Activated CD4-positive, alpha-beta memory T cell treated with anti-CD3 and anti-CD28 coated beads for 36 hours (primary cell): ENCODE measurements at regions of chrX and their contacts with region 1.

Region 1: GRCh38 chrX:136880452-136881013 is at the start of gene RBMX:
- DNase-seq: peak; percentile 93
- H3K4me3 Mint-ChIP-seq: peak within 1 kb of the TSS; percentile 98
- H3K27ac Mint-ChIP-seq: peak within 1 kb of the TSS; percentile 99
- H3K4me1 Mint-ChIP-seq: peaks cover 13% of the 10 kb centered on the region
- H3K27me3 Mint-ChIP-seq: no peaks in the 10 kb centered on the region
- total RNA-seq, gene RBMX: 269 to 271 TPM

Region 2: GRCh38 chrX:136291824-136292223 is 588.7 kb before region 1 on chrX:
- CTCF ChIA-PET with region 1: no interaction called
- POLR2A ChIA-PET with region 1: no interaction called
- intact Hi-C with region 1: no loop called
- DNase-seq: no peak
- H3K4me3 Mint-ChIP-seq: no peak overlapping the region
- H3K27ac Mint-ChIP-seq: no peak overlapping the region
- H3K4me1 Mint-ChIP-seq: no peaks in the 10 kb centered on the region
- H3K27me3 Mint-ChIP-seq: peaks cover 2% of the 10 kb centered on the region

Region 3: DNA sequence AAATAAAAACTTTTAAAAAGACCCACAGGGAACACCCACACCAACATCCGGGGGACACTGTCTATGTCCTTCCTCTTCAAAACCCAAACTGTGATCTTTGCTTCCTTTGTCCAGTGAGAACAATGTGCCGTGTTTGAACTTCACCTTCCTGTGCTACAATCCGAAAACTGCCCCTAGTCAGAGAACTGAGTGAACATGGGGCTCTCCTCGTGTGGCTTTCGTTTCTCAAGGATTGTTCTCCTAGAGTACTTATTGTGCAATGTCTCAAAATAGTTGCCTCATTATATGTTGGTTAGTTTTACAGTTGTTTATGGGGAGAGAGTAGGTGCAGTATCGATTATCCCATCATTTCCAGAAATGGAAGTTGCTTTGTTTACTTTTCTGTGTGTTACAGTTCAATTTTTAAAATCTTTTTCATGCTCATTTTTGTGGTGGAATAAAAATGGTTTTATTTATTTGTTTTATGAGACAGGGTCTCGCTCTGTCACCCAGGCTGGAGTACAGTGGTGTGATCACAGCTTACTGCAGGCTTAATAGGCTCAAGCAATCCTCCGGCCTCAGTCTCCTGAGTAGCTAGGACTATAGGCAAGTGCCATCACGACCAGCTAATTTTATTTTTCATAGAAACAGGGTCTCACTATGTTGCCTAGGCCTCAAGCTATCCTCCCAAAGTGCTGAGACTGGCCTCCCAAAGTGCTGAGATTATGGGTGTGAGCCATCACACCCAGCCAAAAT is 29.9 kb before region 1 on chrX:
- CTCF ChIA-PET with region 1: no interaction called
- POLR2A ChIA-PET with region 1: no interaction called
- intact Hi-C with region 1: no loop called
- DNase-seq: no peak
- H3K4me3 Mint-ChIP-seq: no peak overlapping the region
- H3K27ac Mint-ChIP-seq: no peak overlapping the region
- H3K4me1 Mint-ChIP-seq: peaks cover 16% of the 10 kb centered on the region
- H3K27me3 Mint-ChIP-seq: no peaks in the 10 kb centered on the region

Region 4: DNA sequence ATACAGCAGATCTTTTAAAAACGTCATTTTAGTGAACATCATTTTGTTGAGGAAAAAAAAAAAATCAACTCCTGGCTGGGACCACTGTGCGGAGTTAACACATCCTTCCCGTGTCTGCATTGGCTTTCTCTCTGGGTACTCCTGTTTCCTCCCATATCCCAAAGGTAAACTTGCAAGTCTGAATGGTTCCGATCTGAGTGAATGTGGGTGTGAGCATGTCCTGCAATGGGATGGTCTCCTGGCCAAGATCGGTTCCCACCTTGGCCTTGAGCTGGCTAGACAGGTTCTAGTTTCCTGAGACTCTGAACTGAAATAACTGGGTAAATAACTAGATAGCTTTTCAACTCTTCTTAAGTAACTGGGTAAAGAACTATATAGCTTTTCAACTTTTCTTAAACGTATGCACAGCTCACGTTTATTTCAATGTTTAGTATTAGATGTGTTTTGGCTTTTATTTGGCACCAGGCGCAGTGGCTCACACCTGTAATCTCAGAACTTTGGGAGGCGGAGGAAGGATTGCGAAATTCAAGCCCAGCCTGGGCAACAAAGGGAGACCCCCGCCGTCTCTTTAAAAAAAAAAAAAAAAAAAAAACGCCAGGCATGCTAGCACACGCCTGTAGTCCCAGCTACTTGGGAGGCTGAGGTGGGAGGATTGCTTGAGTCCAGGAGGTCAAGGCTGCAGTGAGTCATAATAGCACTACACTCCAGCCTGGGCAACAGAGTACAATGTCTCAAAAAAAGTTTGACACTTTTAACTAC is 14.0 kb before region 1 on chrX:
- CTCF ChIA-PET with region 1: interaction called, 6 read pairs
- POLR2A ChIA-PET with region 1: interaction called, 27 read pairs
- intact Hi-C with region 1: no loop called
- DNase-seq: no peak
- H3K4me3 Mint-ChIP-seq: no peak overlapping the region
- H3K27ac Mint-ChIP-seq: peak overlapping the region; percentile 77
- H3K4me1 Mint-ChIP-seq: peaks cover 65% of the 10 kb centered on the region
- H3K27me3 Mint-ChIP-seq: no peaks in the 10 kb centered on the region

Region 5: DNA sequence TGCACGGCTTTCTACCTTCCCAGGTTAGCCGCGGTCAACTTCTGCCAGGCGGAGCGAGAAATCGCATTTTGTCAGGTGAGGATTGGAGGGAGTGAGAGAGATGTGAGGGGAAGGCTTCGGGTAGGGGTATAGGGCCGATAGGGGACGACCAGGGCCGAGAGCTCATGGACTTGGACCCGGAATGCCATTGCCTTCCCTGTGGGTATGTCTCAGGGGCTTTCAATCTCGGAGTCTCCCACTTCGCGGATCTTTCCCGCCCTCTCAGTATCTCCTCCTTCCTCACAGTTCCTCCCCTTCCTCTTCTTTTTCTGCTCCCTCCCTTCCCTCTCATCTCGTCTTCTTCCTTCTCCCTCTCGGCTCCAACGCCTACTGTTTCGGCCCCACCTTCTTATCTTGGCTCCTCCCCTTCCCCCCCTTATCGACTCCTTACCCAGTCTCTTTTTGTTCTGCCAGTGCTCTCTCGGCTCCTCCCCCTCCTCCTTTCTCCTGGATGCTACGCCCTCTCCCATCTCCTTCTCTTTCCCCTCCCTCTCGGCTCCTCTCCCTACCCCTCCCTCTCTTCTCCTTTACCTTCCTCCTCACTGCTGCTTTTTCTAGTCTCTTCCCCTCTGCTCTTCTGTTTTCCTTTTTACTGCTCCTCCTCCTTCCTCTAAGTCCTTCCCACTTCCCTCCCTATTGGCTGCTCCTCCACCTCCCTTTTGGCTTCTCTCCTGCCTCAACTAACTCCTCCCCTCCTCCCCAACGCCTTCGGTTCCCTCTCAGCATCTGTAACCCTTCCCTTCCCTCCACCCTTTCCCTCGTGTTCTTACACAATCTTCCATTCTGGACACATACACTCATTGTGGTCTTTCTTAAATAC is 29.4 kb after region 1 on chrX:
- CTCF ChIA-PET with region 1: no interaction called
- POLR2A ChIA-PET with region 1: interaction called, 4 read pairs
- intact Hi-C with region 1: loop called (anchors 1 kb)
- DNase-seq: peak; percentile 78
- H3K4me3 Mint-ChIP-seq: peak overlapping the region; percentile 91
- H3K27ac Mint-ChIP-seq: peak overlapping the region; percentile 90
- H3K4me1 Mint-ChIP-seq: peaks cover 15% of the 10 kb centered on the region
- H3K27me3 Mint-ChIP-seq: no peaks in the 10 kb centered on the region